ENCODE measurements at regions of chr5 and their contacts with region 1.

Region 1: GRCh38 chr5:77143998-77144836 is 57.1 kb upstream of the ZBED3 start:
- H3K4me3 ChIP-seq: no peak overlapping the region
- H3K27ac ChIP-seq: no peak overlapping the region
- H3K4me1 ChIP-seq: no peaks in the 10 kb centered on the region
- CTCF ChIP-seq: peak; percentile 42; the same call in 1 of the 2 replicates

Region 2: GRCh38 chr5:77129391-77129990 is 14.7 kb before region 1 on chr5:
- CTCF ChIA-PET with region 1: interaction called, 32 read pairs
- POLR2A ChIA-PET with region 1: no interaction called
- H3K4me3 ChIP-seq: no peak overlapping the region
- H3K27ac ChIP-seq: no peak overlapping the region
- H3K4me1 ChIP-seq: no peaks in the 10 kb centered on the region
- CTCF ChIP-seq: no peak; the same call in 1 of the 2 replicates

Measured in HEK293 (cell line).